ENCODE measurements at regions of chr6 and their contacts with region 1.

Region 1: DNA sequence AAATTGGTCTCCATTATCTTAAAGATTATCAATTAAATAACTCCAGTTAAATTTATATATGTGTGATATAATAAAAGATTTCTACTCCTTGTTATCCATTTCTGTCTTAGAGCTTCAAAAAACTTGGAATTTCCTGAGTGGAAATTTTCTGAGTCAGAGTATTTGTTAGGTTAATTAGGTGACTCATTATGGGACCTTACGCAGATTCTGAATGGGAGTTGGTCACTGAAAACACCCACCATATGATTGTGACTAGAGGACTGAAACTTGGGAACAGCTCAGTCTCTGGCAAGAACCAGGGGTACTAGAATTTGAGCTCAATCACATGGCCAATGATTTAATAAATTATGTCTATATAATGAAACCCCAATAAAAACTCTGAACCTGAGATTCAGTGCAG is 125.4 kb upstream of the HMGCLL1 start:
- DNase-seq: no peak
- H3K4me3 ChIP-seq: no peak overlapping the region
- H3K27ac ChIP-seq: no peak overlapping the region
- H3K4me1 ChIP-seq: no peaks in the 10 kb centered on the region
- H3K27me3 ChIP-seq: no peaks in the 10 kb centered on the region
- CTCF ChIP-seq: no peak

Region 2: GRCh38 chr6:55758156-55758888 is 53.9 kb after region 1 on chr6:
- CTCF ChIA-PET with region 1: no interaction called
- POLR2A ChIA-PET with region 1: interaction called, 23 read pairs
- intact Hi-C with region 1: no loop called
- DNase-seq: peak; percentile 41 to 81
- H3K4me3 ChIP-seq: no peak overlapping the region
- H3K27ac ChIP-seq: peak overlapping the region; percentile 82
- H3K4me1 ChIP-seq: peaks cover 16% of the 10 kb centered on the region
- H3K27me3 ChIP-seq: no peaks in the 10 kb centered on the region
- CTCF ChIP-seq: no peak

Region 3: GRCh38 chr6:55882720-55883595 is 178.5 kb after region 1 on chr6:
- CTCF ChIA-PET with region 1: no interaction called
- POLR2A ChIA-PET with region 1: no interaction called
- intact Hi-C with region 1: no loop called
- DNase-seq: peak; percentile 27 to 74
- H3K4me3 ChIP-seq: no peak overlapping the region
- H3K27ac ChIP-seq: no peak overlapping the region
- H3K4me1 ChIP-seq: peaks cover 9% of the 10 kb centered on the region; the same call in 1 of the 2 replicates
- H3K27me3 ChIP-seq: no peaks in the 10 kb centered on the region
- CTCF ChIP-seq: no peak